CD8-positive, alpha-beta T cell (primary cell): ENCODE measurements at regions of chr20 and their contacts with region 1.

Region 1: DNA sequence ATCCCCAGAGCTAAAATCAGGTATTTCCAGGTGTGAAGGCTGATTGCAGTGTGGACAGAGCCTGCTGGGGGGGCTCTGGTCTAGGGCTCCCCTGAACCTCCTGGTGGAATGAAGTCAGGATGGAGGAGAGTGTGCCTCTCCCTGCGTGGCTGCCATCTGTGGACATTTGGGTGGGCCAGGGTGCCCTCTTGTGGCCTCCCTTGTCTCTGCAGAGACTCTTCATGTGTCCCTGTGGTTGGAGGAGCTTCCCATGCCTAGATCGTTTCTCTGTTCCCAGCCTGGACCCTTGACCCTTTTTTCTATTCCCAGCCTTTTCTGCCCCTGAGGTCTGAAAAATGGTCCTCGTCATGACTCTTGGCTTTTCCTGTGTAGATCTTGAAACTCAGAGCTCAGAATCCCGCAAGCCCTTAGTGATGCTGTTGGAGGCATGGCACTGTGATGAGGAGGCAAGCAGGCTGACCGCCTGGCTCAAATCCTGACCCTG is 9.9 kb upstream of the PSMF1 start:
- DNase-seq: peak; percentile 22 to 70 (median 52)
- ATAC-seq: peak; percentile 82
- H3K4me3 ChIP-seq: no peak overlapping the region
- H3K4me3 Mint-ChIP-seq: no peak overlapping the region
- H3K27ac ChIP-seq: no peak overlapping the region
- H3K27ac Mint-ChIP-seq: no peak overlapping the region
- H3K4me1 ChIP-seq: no peaks in the 10 kb centered on the region
- H3K4me1 Mint-ChIP-seq: peaks cover 4% of the 10 kb centered on the region
- H3K27me3 ChIP-seq: no peaks in the 10 kb centered on the region
- H3K27me3 Mint-ChIP-seq: no peaks in the 10 kb centered on the region
- CTCF ChIP-seq: peak; percentile 62

Region 2: DNA sequence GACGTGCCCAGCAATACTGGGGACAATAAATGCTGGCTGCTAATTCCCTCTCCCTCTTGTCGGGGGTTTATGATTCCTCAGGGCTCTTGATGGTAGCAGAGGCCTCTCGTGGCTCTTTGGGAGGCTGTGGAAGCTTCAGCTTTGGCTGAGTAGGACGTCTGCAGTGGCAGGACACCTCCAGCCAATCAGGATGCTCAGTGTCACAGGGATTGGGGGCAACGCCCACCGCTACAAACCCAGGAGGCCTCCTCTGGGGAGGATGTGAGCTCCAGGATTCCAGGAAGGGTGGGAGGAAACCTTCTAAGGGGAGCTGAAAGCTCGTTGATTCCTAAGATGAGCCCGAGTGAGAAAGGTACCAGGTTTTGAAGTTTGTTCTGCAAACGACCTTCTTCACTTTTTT is 125.7 kb before region 1 on chr20:
- CTCF ChIA-PET with region 1: no interaction called
- POLR2A ChIA-PET with region 1: no interaction called
- intact Hi-C with region 1: no loop called
- DNase-seq: no peak
- ATAC-seq: no peak
- H3K4me3 ChIP-seq: no peak overlapping the region
- H3K4me3 Mint-ChIP-seq: no peak overlapping the region
- H3K27ac ChIP-seq: no peak overlapping the region
- H3K27ac Mint-ChIP-seq: no peak overlapping the region
- H3K4me1 ChIP-seq: no peaks in the 10 kb centered on the region
- H3K4me1 Mint-ChIP-seq: no peaks in the 10 kb centered on the region
- H3K27me3 ChIP-seq: no peaks in the 10 kb centered on the region
- H3K27me3 Mint-ChIP-seq: peaks cover 33% of the 10 kb centered on the region
- CTCF ChIP-seq: no peak

Region 3: GRCh38 chr20:1001911-1002681 is 106.4 kb before region 1 on chr20 and contains the start of gene RSPO4:
- CTCF ChIA-PET with region 1: no interaction called
- POLR2A ChIA-PET with region 1: no interaction called
- intact Hi-C with region 1: no loop called
- DNase-seq: no peak
- ATAC-seq: no peak
- H3K4me3 ChIP-seq: no peak within 1 kb of the TSS
- H3K4me3 Mint-ChIP-seq: no peak within 1 kb of the TSS
- H3K27ac ChIP-seq: no peak within 1 kb of the TSS
- H3K27ac Mint-ChIP-seq: no peak within 1 kb of the TSS
- H3K4me1 ChIP-seq: no peaks in the 10 kb centered on the region
- H3K4me1 Mint-ChIP-seq: peaks cover 7% of the 10 kb centered on the region
- H3K27me3 ChIP-seq: peaks cover 3 to 5% of the 10 kb centered on the region in 2 experiments
- H3K27me3 Mint-ChIP-seq: peaks cover 43% of the 10 kb centered on the region
- CTCF ChIP-seq: no peak
- total RNA-seq, gene RSPO4: 0.19 to 0.25 TPM

Region 4: GRCh38 chr20:1075616-1076015 is 32.9 kb before region 1 on chr20:
- CTCF ChIA-PET with region 1: no interaction called
- POLR2A ChIA-PET with region 1: no interaction called
- intact Hi-C with region 1: no loop called
- DNase-seq: no peak
- ATAC-seq: no peak
- H3K4me3 ChIP-seq: no peak overlapping the region
- H3K4me3 Mint-ChIP-seq: no peak overlapping the region
- H3K27ac ChIP-seq: no peak overlapping the region
- H3K27ac Mint-ChIP-seq: no peak overlapping the region
- H3K4me1 ChIP-seq: no peaks in the 10 kb centered on the region
- H3K4me1 Mint-ChIP-seq: no peaks in the 10 kb centered on the region
- H3K27me3 ChIP-seq: no peaks in the 10 kb centered on the region
- H3K27me3 Mint-ChIP-seq: peaks cover under 1% of the 10 kb centered on the region
- CTCF ChIP-seq: no peak

Region 5: DNA sequence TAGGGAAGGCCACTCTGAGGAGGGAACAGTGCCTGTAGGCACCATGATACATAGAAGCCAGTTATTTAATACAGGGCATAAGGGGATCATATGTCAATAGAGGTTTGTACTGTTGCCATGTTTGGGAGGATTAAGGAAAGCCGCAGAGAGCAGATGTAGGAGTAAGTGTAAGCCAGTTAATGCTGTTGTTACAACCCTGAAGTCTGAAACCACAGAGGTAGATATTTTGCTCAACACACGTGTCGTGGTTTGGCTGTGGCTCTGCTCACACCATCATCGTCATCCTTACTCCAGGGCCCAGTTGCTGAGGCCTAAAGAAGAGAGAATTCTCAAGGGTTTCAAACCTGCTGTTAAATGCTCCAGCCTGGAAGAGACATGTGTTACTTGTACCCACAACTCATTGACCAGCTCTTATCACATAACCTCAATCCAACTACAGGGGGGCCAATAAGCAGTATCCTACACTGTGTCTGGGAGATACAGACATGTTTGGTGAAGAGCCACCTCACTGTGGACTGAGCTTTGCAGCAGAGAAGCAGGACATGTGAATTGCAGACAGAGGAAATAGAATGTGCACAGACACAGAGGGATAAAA is 21.1 kb before region 1 on chr20:
- CTCF ChIA-PET with region 1: interaction called, 14 read pairs
- POLR2A ChIA-PET with region 1: no interaction called
- intact Hi-C with region 1: no loop called
- DNase-seq: no peak
- ATAC-seq: no peak
- H3K4me3 ChIP-seq: no peak overlapping the region
- H3K4me3 Mint-ChIP-seq: no peak overlapping the region
- H3K27ac ChIP-seq: no peak overlapping the region
- H3K27ac Mint-ChIP-seq: no peak overlapping the region
- H3K4me1 ChIP-seq: peaks cover 15% of the 10 kb centered on the region
- H3K4me1 Mint-ChIP-seq: peaks cover 21% of the 10 kb centered on the region
- H3K27me3 ChIP-seq: no peaks in the 10 kb centered on the region
- H3K27me3 Mint-ChIP-seq: no peaks in the 10 kb centered on the region
- CTCF ChIP-seq: no peak